ENCODE measurements at regions of chr3 and their contacts with region 1.

Region 1: DNA sequence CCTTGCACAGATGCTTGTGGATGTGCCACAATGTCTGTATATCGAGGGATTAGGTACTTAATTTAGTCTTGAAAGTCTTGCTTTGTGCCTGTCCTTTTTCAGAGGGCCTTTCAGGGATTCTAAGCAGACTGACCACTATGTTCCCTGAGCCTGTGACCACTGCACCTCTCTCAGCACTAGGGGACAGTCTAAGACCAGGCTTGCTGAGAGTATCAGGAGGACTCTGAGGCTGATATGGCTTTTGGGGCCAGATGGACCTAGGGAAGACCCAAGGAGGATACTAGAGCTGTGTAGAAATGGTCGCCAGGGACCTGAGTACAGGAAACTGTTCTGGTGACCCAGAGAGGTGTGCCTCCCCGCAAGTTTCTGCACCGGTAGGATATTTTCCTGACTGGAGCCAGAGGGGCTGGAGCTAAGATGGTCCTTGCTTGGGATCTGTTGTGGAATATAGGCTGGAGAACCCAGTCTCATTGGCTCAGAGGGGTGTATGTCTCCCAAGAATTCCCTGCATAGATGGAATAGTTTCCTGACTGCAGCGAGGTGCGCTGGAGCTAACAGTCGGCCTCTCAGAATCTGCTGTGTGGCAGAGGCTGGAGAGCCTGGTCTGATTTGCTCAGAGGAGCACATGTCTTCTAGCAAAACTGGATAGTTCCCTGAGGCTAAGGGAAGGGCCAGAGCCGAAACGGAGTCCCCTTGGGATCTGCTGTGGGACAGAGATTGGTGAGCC is 213.2 kb upstream of the DCBLD2 start:
- DNase-seq: peak; percentile 70
- H3K4me3 ChIP-seq: no peak overlapping the region
- H3K27ac ChIP-seq: no peak overlapping the region
- H3K4me1 ChIP-seq: peaks cover under 1% of the 10 kb centered on the region
- H3K27me3 ChIP-seq: no peaks in the 10 kb centered on the region
- CTCF ChIP-seq: peak; percentile 90 to 91
- POLR2A ChIP-seq: no peak

Region 2: GRCh38 chr3:99526921-99527320 is 412.2 kb after region 1 on chr3:
- CTCF ChIA-PET with region 1: interaction called, 10 read pairs
- POLR2A ChIA-PET with region 1: no interaction called
- dilution Hi-C with region 1: no loop called
- intact Hi-C with region 1: loop called (anchors 1 kb)
- DNase-seq: peak; percentile 75
- H3K4me3 ChIP-seq: no peak overlapping the region
- H3K27ac ChIP-seq: no peak overlapping the region
- H3K4me1 ChIP-seq: peaks cover 9% of the 10 kb centered on the region
- H3K27me3 ChIP-seq: no peaks in the 10 kb centered on the region
- CTCF ChIP-seq: no peak
- POLR2A ChIP-seq: no peak

Region 3: DNA sequence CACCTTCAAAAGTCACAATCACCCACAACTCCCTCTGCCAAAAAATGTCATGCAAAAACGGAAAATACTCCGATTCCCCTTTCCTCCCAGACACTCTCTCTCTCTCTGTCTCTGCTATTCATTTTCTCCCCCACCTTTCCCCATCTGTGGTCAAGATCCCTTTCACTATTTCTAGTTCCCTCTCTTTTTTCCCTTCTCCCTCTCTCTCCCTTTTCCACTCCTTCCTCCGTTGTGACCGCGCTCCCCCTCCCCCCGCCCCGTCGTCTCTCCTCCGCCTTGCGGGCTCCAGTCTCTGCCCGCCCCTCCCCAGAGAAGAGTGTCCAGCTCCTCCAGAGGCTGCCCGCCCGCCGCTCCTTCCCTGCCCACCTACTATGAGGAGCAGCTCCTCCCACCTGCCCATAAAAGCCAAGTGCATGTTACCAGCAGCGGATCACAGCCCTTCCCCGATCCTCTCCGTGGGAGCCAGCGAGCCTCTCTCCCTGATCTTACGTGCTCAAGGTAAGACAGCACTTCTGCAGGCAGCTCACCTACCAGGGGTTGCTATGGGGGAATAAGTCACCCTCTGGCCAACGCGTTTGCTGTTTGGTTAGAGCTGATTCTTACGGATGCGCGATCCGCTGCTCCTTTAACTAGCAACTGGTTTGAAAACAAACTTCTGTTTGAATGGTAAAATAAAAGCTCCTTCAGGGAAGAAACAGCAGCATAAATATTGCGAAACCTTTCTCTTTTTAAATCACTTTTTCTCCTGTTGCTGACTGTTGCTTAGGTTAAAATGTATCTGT is 523.6 kb after region 1 on chr3 and contains the start of gene COL8A1:
- CTCF ChIA-PET with region 1: interaction called, 8 read pairs
- POLR2A ChIA-PET with region 1: no interaction called
- dilution Hi-C with region 1: no loop called
- intact Hi-C with region 1: loop called (anchors 5 kb)
- DNase-seq: peak; percentile 94
- H3K4me3 ChIP-seq: peak within 1 kb of the TSS; percentile 90 to 94 (median 91)
- H3K27ac ChIP-seq: peak within 1 kb of the TSS; percentile 100
- H3K4me1 ChIP-seq: peaks cover 72% of the 10 kb centered on the region
- H3K27me3 ChIP-seq: no peaks in the 10 kb centered on the region
- CTCF ChIP-seq: no peak
- POLR2A ChIP-seq: peak; percentile 94
- total RNA-seq, gene COL8A1: 217 and 358 TPM in 2 replicates

Region 4: DNA sequence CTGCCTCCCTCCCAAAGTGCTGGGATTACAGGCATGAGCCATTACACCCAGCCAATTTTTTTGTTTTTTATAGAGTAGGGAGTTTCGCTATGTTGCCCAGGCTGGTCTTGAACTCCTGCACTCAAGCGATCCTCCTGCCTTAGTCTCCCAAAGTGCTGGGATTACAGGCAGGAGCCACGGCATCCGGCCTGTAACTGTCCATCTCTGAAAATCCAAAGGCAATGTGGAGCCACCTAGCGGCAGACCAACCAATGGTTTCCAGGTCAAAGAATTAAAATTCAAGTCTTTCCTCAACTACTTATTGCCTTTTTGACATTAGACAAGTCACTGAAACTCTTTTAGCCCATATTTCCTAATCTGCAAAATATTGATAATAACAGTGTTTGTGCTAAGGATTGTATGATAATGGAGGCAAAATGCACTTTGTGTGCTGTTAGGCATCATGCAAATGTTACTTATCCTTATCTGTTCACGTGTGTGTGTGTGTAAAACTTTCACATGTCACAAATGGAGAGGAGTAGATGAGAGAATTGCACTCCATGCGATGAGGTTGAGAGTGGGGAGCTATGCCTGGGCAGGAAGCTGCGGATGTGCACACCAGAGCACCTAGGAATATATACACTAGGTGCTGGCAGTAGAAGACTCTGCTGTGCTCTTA is 572.4 kb after region 1 on chr3:
- CTCF ChIA-PET with region 1: interaction called, 6 read pairs
- POLR2A ChIA-PET with region 1: no interaction called
- dilution Hi-C with region 1: no loop called
- intact Hi-C with region 1: loop called (anchors 1 kb)
- DNase-seq: peak; percentile 71
- H3K4me3 ChIP-seq: no peak overlapping the region
- H3K27ac ChIP-seq: no peak overlapping the region
- H3K4me1 ChIP-seq: peaks cover 11% of the 10 kb centered on the region
- H3K27me3 ChIP-seq: no peaks in the 10 kb centered on the region
- CTCF ChIP-seq: peak; percentile 54 to 55
- POLR2A ChIP-seq: peak; percentile 4

Region 5: GRCh38 chr3:99753268-99753975 is 638.7 kb after region 1 on chr3:
- CTCF ChIA-PET with region 1: interaction called, 18 read pairs
- POLR2A ChIA-PET with region 1: no interaction called
- dilution Hi-C with region 1: no loop called
- intact Hi-C with region 1: loop called (anchors 1 kb)
- DNase-seq: peak; percentile 77
- H3K4me3 ChIP-seq: no peak overlapping the region
- H3K27ac ChIP-seq: peak overlapping the region; percentile 21
- H3K4me1 ChIP-seq: peaks cover 28% of the 10 kb centered on the region
- H3K27me3 ChIP-seq: no peaks in the 10 kb centered on the region
- CTCF ChIP-seq: peak; percentile 56 to 58
- POLR2A ChIP-seq: no peak

Region 6: GRCh38 chr3:99808151-99808794 is 693.5 kb after region 1 on chr3:
- CTCF ChIA-PET with region 1: interaction called, 25 read pairs
- POLR2A ChIA-PET with region 1: no interaction called
- dilution Hi-C with region 1: no loop called
- intact Hi-C with region 1: loop called (anchors 2 kb)
- DNase-seq: peak; percentile 86
- H3K4me3 ChIP-seq: no peak overlapping the region
- H3K27ac ChIP-seq: no peak overlapping the region
- H3K4me1 ChIP-seq: no peaks in the 10 kb centered on the region
- H3K27me3 ChIP-seq: no peaks in the 10 kb centered on the region
- CTCF ChIP-seq: peak; percentile 84 to 87
- POLR2A ChIP-seq: no peak